Sigmoid colon (tissue), 7 donors: ENCODE measurements at regions of chr2 and their contacts with region 1.

Region 1: GRCh38 chr2:229273723-229274338 is 2.7 kb upstream of the PID1 start:
- DNase-seq: peak; percentile 80
- H3K4me3 ChIP-seq: peak overlapping the region in 3 of 4 donors; percentile 14 to 29 (median 18)
- H3K27ac ChIP-seq: peak overlapping the region in 1 of 4 donors; percentile 35
- H3K4me1 ChIP-seq: peaks cover 0 to 22% (median 10%) of the 10 kb centered on the region in 4 donors
- H3K27me3 ChIP-seq: no peaks in the 10 kb centered on the region
- CTCF ChIP-seq: peak; percentile 54 to 78 (median 69)
- EP300 ChIP-seq: no peak
- POLR2A ChIP-seq: no peak

Region 2: GRCh38 chr2:228699400-228699799 is 574.4 kb before region 1 on chr2:
- intact Hi-C with region 1: loop called (anchors 10 kb)
- DNase-seq: no peak
- H3K4me3 ChIP-seq: no peak overlapping the region
- H3K27ac ChIP-seq: no peak overlapping the region
- H3K4me1 ChIP-seq: no peaks in the 10 kb centered on the region
- H3K27me3 ChIP-seq: no peaks in the 10 kb centered on the region
- CTCF ChIP-seq: no peak
- EP300 ChIP-seq: no peak
- POLR2A ChIP-seq: no peak

Region 3: DNA sequence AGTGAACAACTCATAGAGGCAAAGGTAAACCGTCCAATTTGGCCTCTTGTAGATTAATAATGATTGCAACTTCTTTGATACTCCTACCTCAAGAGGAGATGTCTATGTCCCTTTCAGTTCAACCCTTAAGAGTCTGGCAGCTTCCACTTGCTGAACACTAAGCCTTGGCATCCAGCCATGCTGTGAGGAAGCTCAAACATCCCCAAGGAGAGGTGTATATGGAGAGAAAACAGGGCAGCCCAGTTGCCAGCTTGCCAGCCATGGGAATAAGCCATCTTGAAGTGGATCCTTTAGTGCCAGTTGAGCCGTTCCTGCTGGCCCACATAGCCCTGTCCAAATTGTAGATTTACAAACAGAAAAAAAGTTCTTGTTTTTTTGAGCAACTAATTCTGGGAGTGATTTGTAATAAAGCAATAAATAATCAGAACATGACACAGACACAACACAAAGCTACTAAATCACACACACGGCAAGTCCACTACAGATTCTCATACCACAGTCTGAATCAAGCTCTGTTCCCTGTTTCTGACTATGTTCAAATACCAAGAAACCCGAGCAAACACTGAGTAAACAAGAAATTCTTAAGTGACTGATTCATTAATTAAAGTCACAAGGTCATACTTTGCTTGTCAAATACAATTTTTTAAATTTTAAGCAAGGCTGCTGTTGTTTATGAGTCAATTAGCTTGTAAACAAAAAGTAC is 98.9 kb before region 1 on chr2:
- intact Hi-C with region 1: no loop called
- DNase-seq: peak; percentile 69
- H3K4me3 ChIP-seq: no peak overlapping the region
- H3K27ac ChIP-seq: no peak overlapping the region
- H3K4me1 ChIP-seq: no peaks in the 10 kb centered on the region
- H3K27me3 ChIP-seq: no peaks in the 10 kb centered on the region
- CTCF ChIP-seq: no peak
- EP300 ChIP-seq: no peak
- POLR2A ChIP-seq: no peak

Region 4: GRCh38 chr2:229416116-229416694 is 142.4 kb after region 1 on chr2:
- intact Hi-C with region 1: loop called (anchors 10 kb)
- DNase-seq: peak; percentile 94
- H3K4me3 ChIP-seq: no peak overlapping the region
- H3K27ac ChIP-seq: peak overlapping the region; percentile 54 to 76 (median 66)
- H3K4me1 ChIP-seq: peaks cover 0 to 9% (median 7%) of the 10 kb centered on the region in 4 donors
- H3K27me3 ChIP-seq: no peaks in the 10 kb centered on the region
- CTCF ChIP-seq: no peak
- EP300 ChIP-seq: no peak
- POLR2A ChIP-seq: no peak

Region 5: DNA sequence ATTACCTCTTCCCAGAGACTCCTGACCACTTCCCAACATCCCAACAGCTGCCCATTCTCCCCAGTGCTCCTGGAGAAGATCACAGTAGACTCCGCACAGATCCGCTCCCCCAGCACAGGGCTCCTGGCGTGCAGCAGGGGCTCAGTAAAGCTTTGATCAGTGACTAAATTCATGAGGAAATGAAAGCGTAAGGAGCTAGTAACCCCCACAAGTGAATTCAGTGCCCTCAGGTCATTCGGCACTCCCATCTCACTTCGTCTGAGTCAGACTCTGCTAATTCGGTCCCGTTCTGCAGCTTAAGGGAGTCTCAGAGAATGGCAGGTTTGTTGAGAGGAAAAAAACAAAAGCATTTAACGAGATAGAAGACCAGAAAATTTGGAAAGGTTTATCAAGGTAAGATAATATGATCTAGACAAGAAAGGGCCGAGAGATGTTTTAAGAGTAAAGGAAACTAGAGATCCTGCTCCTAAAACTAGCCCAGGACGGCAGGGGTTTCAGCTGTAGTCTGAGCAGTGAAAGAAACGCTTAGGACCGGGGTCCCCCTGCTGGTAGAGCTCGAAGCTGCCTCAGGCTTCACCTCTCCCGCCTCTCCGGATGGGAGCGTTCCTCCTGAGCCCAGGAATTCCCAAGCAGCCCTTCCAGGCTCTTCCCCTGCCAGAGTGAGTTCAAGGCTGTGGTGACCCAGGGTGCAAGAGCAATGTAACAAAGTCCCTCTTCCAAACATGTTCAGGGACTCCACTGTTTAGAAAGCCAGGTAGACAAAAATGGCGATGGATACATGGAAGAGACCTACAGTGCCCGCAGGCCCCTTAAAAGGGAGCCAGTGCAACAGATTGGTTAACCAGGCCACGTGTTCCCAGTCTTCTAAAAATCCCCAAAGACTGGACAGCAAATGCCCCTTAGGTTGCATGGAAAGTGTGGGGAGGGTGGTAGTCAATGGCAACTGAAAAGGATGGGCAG is 313.2 kb after region 1 on chr2:
- intact Hi-C with region 1: loop called (anchors 2 kb)
- DNase-seq: peak; percentile 91
- H3K4me3 ChIP-seq: peak overlapping the region; percentile 3 to 28 (median 17)
- H3K27ac ChIP-seq: peak overlapping the region in 2 of 4 donors; percentile 43 to 51
- H3K4me1 ChIP-seq: peaks cover 0 to 5% (median 2%) of the 10 kb centered on the region in 4 donors
- H3K27me3 ChIP-seq: no peaks in the 10 kb centered on the region
- CTCF ChIP-seq: peak; percentile 70 to 90 (median 85)
- EP300 ChIP-seq: no peak
- POLR2A ChIP-seq: no peak